Posterior cingulate gyrus (tissue), 11 donors: ENCODE measurements at regions of chr19 and their contacts with region 1.

Region 1: GRCh38 chr19:58362272-58362994 is at the start of gene ZNF497:
- DNase-seq: peak; percentile 94 to 100 (median 96)

Region 2: DNA sequence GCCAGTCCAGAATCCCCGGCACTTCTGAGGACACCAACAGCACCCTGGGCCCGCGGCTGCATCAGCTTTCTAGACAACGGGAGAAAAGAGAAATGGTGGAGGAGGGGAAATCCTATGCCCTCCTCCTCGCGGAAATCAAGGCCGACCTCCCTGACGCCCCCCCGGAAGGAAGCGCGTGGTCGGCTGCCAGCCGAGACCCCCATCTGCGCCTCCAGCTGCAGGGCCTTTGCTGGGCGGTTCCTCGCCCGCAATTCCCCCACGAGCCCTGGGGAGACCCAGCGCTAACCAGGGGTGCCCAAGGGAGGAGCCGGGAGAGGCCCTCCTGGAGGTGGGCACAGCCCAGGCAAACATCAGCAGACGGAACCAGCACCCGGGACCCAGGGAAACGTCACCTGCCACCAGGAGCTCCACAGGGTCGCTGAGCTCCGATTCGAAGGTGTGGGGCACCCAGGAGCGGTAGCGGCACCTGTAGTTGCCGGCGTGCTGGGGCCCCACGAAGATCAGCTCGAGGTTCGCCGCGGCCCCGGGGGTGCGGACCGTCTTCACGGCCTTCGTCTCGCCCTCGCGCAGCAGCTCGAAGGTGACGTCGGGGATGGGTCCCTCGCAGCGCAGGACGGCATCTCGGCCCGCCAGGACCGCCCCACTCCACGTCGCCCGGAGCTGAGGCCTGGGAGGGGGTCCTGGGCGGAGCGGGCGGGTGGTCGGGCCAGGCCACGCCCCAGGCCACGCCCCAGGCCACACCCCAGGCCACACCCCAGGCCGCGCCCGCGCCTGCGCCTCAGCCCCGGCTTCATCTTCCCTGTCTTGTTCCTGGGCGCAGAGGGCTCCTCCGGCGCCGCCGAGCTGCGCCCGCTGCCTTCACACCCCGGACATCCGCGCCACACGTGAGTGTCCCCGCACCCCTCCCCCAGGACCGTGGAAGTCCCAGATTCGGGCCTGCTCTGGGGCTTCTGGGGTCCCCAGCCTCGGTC is 15.2 kb before region 1 on chr19:
- intact Hi-C with region 1: loop called (anchors 1 kb)
- DNase-seq: peak; percentile 57 to 98 (median 75)

Region 3: DNA sequence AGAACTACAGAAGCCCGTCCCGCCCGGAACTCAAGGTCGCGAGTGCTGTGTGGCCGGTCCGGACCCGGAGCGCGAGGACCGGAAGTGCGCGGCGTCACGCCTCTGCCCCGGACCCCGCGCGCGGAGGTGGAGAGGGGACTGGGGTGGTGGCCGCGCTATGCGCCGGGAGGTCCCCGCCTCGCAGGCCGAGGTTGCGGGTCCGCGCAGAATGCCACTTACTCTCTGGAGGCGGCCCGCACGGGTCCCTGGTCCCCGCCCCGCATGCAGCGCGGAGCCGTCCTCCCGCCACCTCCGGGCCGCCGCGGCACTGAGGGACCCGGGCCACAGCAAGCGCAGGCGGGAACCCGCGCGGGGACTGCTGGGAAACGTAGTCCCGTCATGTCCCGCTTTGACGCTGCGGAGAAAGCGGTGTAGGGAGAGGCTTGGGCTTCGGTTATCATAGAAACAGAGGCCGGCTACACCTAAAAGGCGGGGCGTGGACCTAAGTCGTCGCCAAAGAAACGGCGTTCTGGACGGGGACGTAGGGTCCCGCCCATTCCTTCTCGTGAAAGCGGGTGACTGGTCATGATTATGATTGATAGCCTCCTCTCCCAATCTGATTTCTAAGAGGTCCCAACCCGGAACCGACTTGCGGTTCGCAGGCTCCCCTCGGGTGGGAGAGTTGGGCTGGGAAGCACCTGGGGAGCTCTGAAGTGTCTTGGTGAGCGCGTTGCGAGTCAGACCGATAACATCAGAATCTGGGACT is 18.5 kb after region 1 on chr19 and contains the start of gene ZNF837:
- intact Hi-C with region 1: loop called (anchors 2 kb)
- DNase-seq: peak; percentile 96 to 100 (median 98)